Activated CD4-positive, alpha-beta memory T cell treated with anti-CD3 and anti-CD28 coated beads for 36 hours (primary cell): ENCODE measurements at regions of chr9 and their contacts with region 1.

Region 1: GRCh38 chr9:31674264-31674663 is 710.2 kb upstream of the ACO1 start:
- DNase-seq: no peak
- H3K4me3 Mint-ChIP-seq: no peak overlapping the region
- H3K27ac Mint-ChIP-seq: no peak overlapping the region
- H3K4me1 Mint-ChIP-seq: peaks cover 25% of the 10 kb centered on the region
- H3K27me3 Mint-ChIP-seq: no peaks in the 10 kb centered on the region

Region 2: GRCh38 chr9:31697956-31698355 is 23.7 kb after region 1 on chr9:
- CTCF ChIA-PET with region 1: no interaction called
- POLR2A ChIA-PET with region 1: no interaction called
- intact Hi-C with region 1: loop called (anchors 2 kb)
- DNase-seq: no peak
- H3K4me3 Mint-ChIP-seq: no peak overlapping the region
- H3K27ac Mint-ChIP-seq: no peak overlapping the region
- H3K4me1 Mint-ChIP-seq: peaks cover 13% of the 10 kb centered on the region
- H3K27me3 Mint-ChIP-seq: no peaks in the 10 kb centered on the region